Endothelial cell of umbilical vein (primary cell): ENCODE measurements at regions of chr12 and their contacts with region 1.

Region 1: DNA sequence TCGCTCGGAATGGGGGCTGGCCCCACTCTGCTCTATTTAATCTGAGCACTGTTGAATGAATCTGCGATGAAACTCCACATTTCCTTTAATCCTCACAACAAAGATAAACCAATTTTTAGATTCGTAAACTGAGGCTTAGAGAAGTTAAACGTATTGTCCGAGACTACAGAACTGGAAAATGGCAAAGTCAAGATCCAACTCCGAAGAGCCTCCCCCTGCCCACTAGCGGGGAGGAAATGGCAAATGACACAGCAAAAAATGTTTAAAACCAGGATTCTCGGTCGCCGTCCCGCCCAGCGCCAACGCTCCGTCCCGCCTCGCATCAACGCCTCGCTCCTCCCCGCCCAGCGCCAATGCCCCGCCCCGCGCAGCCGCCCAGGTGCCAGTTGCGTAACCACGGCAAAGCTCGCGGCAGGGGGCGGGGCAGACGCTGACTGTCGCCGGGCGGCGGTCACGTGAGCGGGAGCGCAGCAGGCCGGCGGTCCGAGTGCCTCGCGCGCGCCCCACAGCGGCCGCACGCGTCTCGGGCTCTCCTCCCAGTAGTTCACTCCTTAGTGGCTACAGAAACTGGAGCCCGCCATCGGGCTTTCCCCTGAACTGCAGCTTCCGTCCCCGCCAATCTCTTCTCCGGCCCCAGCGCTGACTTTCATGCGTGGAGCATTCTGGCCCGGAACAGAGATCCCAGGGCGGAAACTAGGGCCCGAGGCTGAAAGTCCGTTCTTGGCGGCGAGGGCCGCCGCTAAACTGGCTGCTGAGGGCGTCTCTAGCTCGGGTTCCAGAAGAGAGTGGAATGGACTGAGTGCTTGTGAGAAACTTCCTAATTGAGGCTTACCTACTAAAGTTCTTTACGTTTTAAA is 13.6 kb upstream of the LRRC23 start:
- DNase-seq: peak; percentile 98
- H3K4me3 ChIP-seq: peak overlapping the region; percentile 36 to 67 (median 46)
- H3K27ac ChIP-seq: peak overlapping the region; percentile 96
- H3K4me1 ChIP-seq: peaks cover 10% of the 10 kb centered on the region
- H3K27me3 ChIP-seq: no peaks in the 10 kb centered on the region
- CTCF ChIP-seq: peak; percentile 83 to 89
- POLR2A ChIP-seq: peak; percentile 93

Region 2: DNA sequence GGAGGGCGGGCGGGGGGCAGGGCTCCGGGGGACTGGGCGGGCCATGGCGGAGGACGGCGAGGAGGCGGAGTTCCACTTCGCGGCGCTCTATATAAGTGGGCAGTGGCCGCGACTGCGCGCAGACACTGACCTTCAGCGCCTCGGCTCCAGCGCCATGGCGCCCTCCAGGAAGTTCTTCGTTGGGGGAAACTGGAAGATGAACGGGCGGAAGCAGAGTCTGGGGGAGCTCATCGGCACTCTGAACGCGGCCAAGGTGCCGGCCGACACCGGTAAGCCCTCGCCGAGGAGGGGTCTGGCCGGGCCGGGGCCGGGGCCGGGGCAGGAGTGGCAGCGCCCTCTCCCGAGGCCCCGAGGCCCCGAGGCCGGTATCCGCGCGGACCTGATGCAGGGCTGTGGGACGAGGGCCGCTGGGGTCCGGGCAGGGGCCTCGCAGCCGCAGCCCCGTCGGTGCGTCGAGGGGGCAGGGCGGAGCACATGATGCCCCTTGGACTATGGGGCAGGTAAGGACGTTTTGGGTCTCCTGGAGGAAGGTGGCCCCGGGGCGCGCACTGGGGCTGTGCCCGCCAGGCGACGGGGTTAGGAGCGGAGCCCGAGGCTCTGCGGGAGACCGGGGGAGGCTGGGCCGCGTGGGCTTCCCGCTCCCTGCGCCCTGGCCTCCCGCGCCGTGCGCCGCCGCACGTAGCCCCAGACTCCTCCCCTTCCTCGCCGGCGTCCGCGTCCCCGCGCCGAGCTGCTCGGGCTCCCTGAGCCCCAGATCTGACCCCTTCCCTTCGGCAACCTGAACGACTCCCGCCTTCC is 23.4 kb before region 1 on chr12 and contains the start of gene TPI1:
- CTCF ChIA-PET with region 1: interaction called, 74 read pairs
- POLR2A ChIA-PET with region 1: interaction called, 22 read pairs
- dilution Hi-C with region 1: no loop called
- intact Hi-C with region 1: no loop called
- DNase-seq: peak; percentile 78
- H3K4me3 ChIP-seq: peak within 1 kb of the TSS; percentile 60 to 95 (median 75)
- H3K27ac ChIP-seq: peak within 1 kb of the TSS; percentile 43
- H3K4me1 ChIP-seq: peaks cover 32% of the 10 kb centered on the region
- H3K27me3 ChIP-seq: no peaks in the 10 kb centered on the region
- CTCF ChIP-seq: no peak
- POLR2A ChIP-seq: peak; percentile 98
- total RNA-seq, gene TPI1: 643 and 676 TPM in 2 replicates

Region 3: DNA sequence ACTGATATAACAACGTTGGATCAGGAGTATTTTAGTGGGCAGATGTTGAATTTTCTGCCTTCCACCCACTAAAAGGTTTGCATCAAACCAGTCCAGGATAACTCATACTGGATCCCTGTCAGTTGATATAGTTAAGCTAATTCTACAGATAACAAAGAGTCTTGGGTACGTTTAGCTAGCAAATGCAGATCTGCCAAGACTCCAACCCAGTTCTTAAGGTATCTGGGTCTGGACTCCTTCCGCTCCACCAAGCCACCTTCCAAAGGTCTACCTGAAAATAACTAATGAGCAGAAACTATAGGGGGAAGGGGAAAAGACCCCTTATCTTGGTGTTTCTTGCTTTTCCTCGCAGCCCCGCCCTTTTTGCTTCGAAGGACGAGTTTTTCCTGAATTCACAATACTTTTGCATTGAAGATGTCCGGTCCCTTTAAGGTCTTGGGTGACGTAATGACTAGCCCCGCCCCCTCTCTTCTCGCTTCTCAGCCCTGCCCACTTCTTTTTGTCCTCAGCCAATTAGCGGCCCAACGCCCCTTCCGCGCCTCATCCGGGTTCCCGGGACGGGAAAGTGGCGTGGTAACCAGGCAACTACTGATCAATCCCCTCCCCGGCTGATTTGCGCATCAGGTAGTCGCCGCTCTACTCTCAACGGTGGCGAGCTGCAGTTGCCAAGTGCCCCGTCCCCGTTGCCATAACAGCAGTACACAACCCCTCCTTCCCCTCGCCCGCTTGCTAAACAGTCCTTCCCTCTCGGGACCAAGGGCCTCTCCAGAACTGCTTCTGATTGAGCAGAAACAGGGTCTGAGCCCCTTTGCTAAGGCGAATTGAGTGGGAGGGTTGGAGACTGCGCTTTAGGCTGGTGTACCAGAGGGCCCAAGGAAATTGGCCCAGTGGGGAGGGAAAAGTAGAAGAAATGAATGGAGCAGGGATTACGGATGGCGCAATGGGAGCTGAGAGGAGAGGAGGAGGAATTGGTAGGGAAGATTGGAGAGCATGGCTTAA is 13.6 kb after region 1 on chr12 and contains the start of gene LRRC23:
- CTCF ChIA-PET with region 1: interaction called, 10 read pairs
- POLR2A ChIA-PET with region 1: no interaction called
- dilution Hi-C with region 1: no loop called
- intact Hi-C with region 1: loop called (anchors 1 kb)
- DNase-seq: peak; percentile 95
- H3K4me3 ChIP-seq: peak within 1 kb of the TSS; percentile 13 to 70 (median 51)
- H3K27ac ChIP-seq: peak within 1 kb of the TSS; percentile 32
- H3K4me1 ChIP-seq: peaks cover 7% of the 10 kb centered on the region
- H3K27me3 ChIP-seq: no peaks in the 10 kb centered on the region
- CTCF ChIP-seq: no peak
- POLR2A ChIP-seq: peak; percentile 64
- total RNA-seq, gene LRRC23: 2.7 and 3.5 TPM in 2 replicates